CD8-positive, alpha-beta memory T cell (primary cell): ENCODE measurements at regions of chr20 and their contacts with region 1.

Region 1: GRCh38 chr20:44738813-44739477 is 6.7 kb upstream of the KCNK15 start:
- DNase-seq: peak in 4 of 5 donors; percentile 13 to 55 (median 28)
- H3K4me3 ChIP-seq: no peak overlapping the region
- H3K4me3 Mint-ChIP-seq: no peak overlapping the region
- H3K27ac ChIP-seq: no peak overlapping the region
- H3K27ac Mint-ChIP-seq: peak overlapping the region in 1 of 8 donors; percentile 73
- H3K4me1 ChIP-seq: peaks cover 8% of the 10 kb centered on the region
- H3K4me1 Mint-ChIP-seq: peaks cover 5 to 19% (median 11%) of the 10 kb centered on the region in 3 donors
- H3K27me3 ChIP-seq: no peaks in the 10 kb centered on the region
- H3K27me3 Mint-ChIP-seq: peaks cover 15% of the 10 kb centered on the region in 2 donors

Region 2: GRCh38 chr20:44651684-44652423 is 87.1 kb before region 1 on chr20 and contains the start of gene ADA:
- CTCF ChIA-PET with region 1: no interaction called
- POLR2A ChIA-PET with region 1: interaction called, 15 read pairs
- DNase-seq: peak; percentile 45 to 69 (median 54)
- H3K4me3 ChIP-seq: peak within 1 kb of the TSS; percentile 85
- H3K4me3 Mint-ChIP-seq: peak within 1 kb of the TSS; percentile 83 to 95 (median 89)
- H3K27ac ChIP-seq: peak within 1 kb of the TSS; percentile 71
- H3K27ac Mint-ChIP-seq: peak within 1 kb of the TSS; percentile 79 to 98 (median 94)
- H3K4me1 ChIP-seq: peaks cover 50% of the 10 kb centered on the region
- H3K4me1 Mint-ChIP-seq: peaks cover 43 to 56% (median 55%) of the 10 kb centered on the region in 3 donors
- H3K27me3 ChIP-seq: no peaks in the 10 kb centered on the region
- H3K27me3 Mint-ChIP-seq: no peaks in the 10 kb centered on the region
- total RNA-seq, gene ADA: 21.1 to 21.3 TPM